Activated T-helper 1 cell treated with anti-CD3 and anti-CD28 coated beads, Interleukin-12 subunit alpha, Interleukin-12 subunit beta, Interleukin-2, Interleukin-4 antibody, amounts not matched to agents 30 ng/mL and 10 ng/mL and 1 ng/mL, durations not matched to agents 14 hours and 24 hours and 36 hours (primary cell): ENCODE measurements at regions of chr16 and their contacts with region 1.

Region 1: DNA sequence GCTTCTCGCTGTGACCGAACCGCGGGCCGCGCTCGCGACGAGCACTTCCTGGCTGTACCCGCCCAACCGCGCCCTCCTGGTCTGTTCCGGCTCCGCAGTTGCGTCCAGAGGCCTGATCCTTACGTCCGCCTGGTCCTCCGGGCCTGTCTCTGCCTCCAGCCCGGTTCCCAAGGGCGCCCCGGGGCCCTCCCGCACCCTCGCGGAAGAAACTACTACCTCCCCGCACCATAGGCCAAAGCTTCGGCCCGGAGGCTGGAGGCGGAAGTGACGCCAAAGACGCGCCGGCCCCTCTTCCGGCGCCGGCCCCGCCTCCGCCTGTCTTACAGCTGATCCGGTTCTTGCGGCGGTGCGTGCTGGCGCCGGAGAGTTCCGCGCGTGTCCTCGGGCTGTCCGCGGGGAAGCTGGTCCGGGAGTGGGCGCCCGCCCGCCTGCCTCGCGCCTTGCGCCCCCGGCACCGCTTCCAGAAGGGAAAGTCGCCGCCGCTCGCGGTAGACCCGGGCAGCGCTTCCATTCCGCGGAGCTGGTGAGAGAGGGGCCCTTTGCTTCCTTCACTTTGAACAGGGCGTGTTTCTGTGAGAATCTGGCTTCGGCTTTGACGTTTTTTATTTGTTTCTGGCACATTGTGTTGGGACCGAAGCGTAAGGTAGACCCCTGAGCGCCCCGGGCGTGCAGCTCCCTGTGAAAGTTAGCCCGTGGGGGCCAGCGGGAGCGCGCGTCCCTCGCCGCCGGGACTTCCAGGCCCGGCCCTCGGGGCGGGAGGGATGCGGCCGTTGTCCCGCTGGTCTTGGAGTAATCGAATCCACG is at the start of gene ZNF778:
- DNase-seq: peak; percentile 84
- H3K4me3 Mint-ChIP-seq: peak within 1 kb of the TSS; percentile 63
- H3K27ac Mint-ChIP-seq: peak within 1 kb of the TSS; percentile 37
- H3K4me1 Mint-ChIP-seq: peaks cover 12% of the 10 kb centered on the region
- H3K27me3 Mint-ChIP-seq: no peaks in the 10 kb centered on the region
- total RNA-seq, gene ZNF778: 8.1 and 9.5 TPM in 2 replicates

Region 2: GRCh38 chr16:88737298-88738150 is 480.1 kb before region 1 on chr16:
- intact Hi-C with region 1: loop called (anchors 2 kb)
- DNase-seq: peak; percentile 49
- H3K4me3 Mint-ChIP-seq: no peak overlapping the region
- H3K27ac Mint-ChIP-seq: no peak overlapping the region
- H3K4me1 Mint-ChIP-seq: no peaks in the 10 kb centered on the region
- H3K27me3 Mint-ChIP-seq: no peaks in the 10 kb centered on the region

Region 3: GRCh38 chr16:88811769-88812512 is 405.6 kb before region 1 on chr16 and contains the start of gene APRT:
- intact Hi-C with region 1: loop called (anchors 1 kb)
- DNase-seq: peak; percentile 97
- H3K4me3 Mint-ChIP-seq: peak within 1 kb of the TSS; percentile 90
- H3K27ac Mint-ChIP-seq: peak within 1 kb of the TSS; percentile 98
- H3K4me1 Mint-ChIP-seq: peaks cover 11% of the 10 kb centered on the region
- H3K27me3 Mint-ChIP-seq: no peaks in the 10 kb centered on the region
- total RNA-seq, gene APRT: 301 and 303 TPM in 2 replicates

Region 4: DNA sequence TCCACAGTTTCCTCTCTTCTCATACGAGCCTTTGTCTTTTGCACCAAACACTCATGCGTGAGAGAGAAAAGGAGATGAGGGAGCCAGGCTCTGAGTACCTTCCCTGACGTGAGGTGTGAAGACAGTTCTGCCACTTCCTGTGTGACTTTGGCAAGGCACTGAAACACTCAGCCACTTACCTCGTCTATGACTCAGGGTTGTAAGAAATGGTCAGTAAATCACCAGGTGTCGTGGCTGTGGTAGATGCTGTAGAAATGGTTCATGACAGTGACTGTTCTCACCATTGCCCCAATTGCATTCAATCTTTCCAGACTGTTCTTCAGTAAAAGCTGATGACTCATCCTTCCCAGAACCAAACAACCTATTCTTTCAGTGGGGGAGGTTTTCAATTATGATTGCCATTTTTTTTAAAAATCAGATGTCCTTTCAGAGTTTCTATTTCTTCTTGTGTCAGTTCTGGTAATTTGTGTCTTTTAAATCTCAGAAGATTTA is 191.4 kb before region 1 on chr16:
- intact Hi-C with region 1: loop called (anchors 10 kb)
- DNase-seq: peak; percentile 72
- H3K4me3 Mint-ChIP-seq: peak overlapping the region; percentile 34
- H3K27ac Mint-ChIP-seq: peak overlapping the region; percentile 82
- H3K4me1 Mint-ChIP-seq: peaks cover 38% of the 10 kb centered on the region
- H3K27me3 Mint-ChIP-seq: no peaks in the 10 kb centered on the region

Region 5: GRCh38 chr16:89171463-89172170 is 46.0 kb before region 1 on chr16 and contains the start of gene CDH15:
- intact Hi-C with region 1: loop called (anchors 1 kb)
- DNase-seq: peak; percentile 86
- H3K4me3 Mint-ChIP-seq: peak within 1 kb of the TSS; percentile 71
- H3K27ac Mint-ChIP-seq: peak within 1 kb of the TSS; percentile 55
- H3K4me1 Mint-ChIP-seq: peaks cover 6% of the 10 kb centered on the region
- H3K27me3 Mint-ChIP-seq: no peaks in the 10 kb centered on the region
- total RNA-seq, gene CDH15: not detected in 2 replicates

Region 6: GRCh38 chr16:89241187-89242007 is 23.8 kb after region 1 on chr16:
- intact Hi-C with region 1: loop called (anchors 1 kb)
- DNase-seq: peak; percentile 72
- H3K4me3 Mint-ChIP-seq: peak overlapping the region; percentile 95
- H3K27ac Mint-ChIP-seq: peak overlapping the region; percentile 97
- H3K4me1 Mint-ChIP-seq: peaks cover 5% of the 10 kb centered on the region
- H3K27me3 Mint-ChIP-seq: peaks cover 2% of the 10 kb centered on the region